WTC11 (cell line): ENCODE measurements at regions of chr14 and their contacts with region 1.

Region 1: GRCh38 chr14:21437063-21437901 is 18.6 kb downstream of the CHD8 start:
- DNase-seq: peak; percentile 100
- ATAC-seq: peak; percentile 99
- H3K4me3 Mint-ChIP-seq: peak overlapping the region; percentile 97
- H3K27ac Mint-ChIP-seq: peak overlapping the region; percentile 96
- H3K4me1 Mint-ChIP-seq: peaks cover 26% of the 10 kb centered on the region
- H3K27me3 Mint-ChIP-seq: no peaks in the 10 kb centered on the region
- CTCF ChIP-seq: no peak

Region 2: DNA sequence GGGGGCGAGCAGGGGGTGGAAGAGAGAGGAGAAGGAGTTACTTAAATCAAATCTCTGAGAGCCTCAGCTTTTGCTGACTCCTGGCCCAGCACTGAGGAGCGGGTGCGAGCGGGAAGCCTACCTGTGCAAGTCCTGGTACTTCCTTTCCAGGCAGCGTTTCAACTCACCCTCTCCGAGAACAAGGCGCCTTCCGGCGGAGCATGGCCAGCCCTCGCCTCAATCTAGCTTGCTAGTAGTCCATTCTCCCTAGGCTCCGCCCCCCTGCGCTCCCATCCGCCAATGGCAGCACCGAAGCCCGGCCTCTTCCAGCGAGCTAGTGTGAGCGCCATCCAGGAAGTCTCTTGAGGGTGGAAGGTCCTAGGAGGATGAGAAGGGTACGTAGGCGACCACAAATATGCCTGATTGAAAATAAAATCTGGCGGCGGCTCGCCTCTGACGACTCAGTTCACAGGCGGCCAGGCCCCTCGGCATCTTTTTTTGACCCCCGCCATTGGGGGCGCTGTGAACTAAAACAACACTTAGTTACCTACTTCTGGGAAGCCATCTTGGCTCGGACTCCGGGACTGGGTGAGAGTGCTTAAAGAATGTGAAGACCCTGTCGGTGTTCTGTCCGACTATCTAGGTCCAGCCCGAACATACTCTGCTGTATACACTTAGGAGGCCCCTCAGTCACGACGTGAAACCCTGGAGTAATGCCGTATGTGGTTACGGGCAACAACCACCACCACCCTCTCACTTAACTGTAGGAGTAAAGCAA is 18.8 kb after region 1 on chr14 and contains the start of gene CHD8:
- CTCF ChIA-PET with region 1: interaction called, 37 read pairs
- POLR2A ChIA-PET with region 1: interaction called, 41 read pairs
- DNase-seq: peak; percentile 100
- ATAC-seq: peak; percentile 99
- H3K4me3 Mint-ChIP-seq: peak within 1 kb of the TSS; percentile 94
- H3K27ac Mint-ChIP-seq: peak within 1 kb of the TSS; percentile 100
- H3K4me1 Mint-ChIP-seq: peaks cover 23% of the 10 kb centered on the region
- H3K27me3 Mint-ChIP-seq: no peaks in the 10 kb centered on the region
- CTCF ChIP-seq: peak; percentile 51; the same call in 1 of the 2 replicates
- total RNA-seq, gene CHD8: 119 to 133 TPM (median 119 TPM) in 3 replicates